ENCODE measurements at regions of chr1 and their contacts with region 1.

Region 1: DNA sequence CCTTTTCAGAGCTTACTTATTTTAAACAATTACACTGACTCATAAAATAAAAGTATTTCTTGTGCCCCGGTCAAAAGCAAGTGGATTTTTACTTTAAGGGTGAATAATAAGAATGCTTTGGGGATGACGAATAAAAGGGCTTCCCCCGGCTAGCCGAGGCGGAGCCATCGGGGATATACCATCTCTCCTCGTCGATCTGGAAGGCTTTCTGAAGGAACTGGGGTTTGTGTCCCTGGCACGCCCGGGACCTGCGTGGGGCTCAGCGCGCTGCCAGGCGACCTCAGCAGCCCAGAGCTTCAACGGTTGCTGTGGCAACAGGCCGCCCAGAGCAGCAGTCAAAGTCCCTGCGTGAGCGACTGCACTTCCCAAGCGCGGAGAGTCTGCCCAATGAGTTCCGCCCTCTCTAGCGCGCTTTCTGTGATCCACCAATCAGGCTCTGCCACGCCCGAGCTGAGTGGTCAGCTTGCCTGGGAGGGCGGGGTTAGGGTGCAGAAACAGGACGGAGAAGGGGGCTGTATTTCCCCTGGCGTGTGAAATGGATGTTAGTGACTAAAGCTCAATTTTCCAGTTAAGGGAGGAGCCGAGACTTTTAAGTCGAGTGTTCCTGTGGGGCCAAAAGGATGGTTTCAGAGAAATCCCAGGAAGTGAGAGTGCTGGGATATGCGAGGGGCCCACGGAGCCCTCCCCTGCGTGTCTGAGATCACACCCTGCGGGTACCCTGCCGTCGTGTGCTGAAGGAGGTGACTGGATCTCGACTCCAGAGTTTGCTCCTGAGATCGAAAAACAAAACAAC is 33.0 kb upstream of the MGST3 start:
- DNase-seq: peak; percentile 95
- H3K4me3 Mint-ChIP-seq: peak overlapping the region; percentile 85
- H3K27ac Mint-ChIP-seq: peak overlapping the region; percentile 76
- H3K4me1 Mint-ChIP-seq: peaks cover 34% of the 10 kb centered on the region
- H3K27me3 Mint-ChIP-seq: peaks cover 33% of the 10 kb centered on the region

Region 2: DNA sequence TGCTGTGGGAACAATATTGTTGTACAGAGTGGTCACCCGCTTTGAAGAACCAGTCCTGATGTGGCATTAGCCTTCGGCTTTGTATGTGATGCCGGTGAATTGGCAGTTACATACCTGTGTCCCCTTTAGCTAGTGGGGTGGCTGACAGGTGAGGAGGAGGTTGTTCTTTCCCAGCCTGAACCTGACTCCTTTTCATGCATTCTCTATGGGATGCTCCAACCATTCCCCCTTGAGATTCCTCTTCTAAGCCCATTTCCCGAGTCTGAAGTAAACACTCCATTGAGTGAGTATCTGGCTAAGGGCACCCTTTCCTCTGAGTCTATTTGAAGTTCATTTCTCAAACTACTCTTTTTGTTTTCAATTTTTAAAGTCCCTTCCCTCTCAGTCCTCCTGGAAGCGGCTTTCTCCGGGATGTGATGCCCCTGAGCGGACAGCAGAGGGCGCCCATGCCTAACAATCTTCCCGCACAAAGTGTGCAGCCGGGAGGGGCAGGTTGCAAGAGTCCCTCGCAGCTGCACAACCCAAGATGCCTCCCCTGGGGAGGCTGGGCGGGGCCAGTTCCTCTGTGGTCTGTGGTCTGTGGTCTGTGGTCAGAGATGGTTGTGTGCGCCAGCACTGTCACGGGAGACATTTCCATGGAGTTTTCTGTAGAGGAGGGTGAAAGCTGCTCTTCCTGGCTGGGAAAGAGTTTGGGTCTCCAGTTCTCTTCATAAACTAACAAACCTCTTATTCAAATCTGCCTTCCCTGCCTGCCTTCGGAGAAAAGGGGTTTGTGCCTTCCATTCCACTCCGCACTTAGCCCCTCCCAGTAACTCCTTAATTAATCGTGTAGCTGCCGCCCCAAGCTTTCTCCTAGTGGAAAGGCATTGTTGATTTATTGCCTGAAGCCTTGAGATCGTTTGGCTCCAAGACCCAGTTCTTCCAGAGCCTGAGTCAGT is 205.2 kb before region 1 on chr1:
- CTCF ChIA-PET with region 1: interaction called, 96 read pairs
- POLR2A ChIA-PET with region 1: interaction called, 12 read pairs
- DNase-seq: peak; percentile 95
- H3K4me3 Mint-ChIP-seq: peak overlapping the region; percentile 59
- H3K27ac Mint-ChIP-seq: peak overlapping the region; percentile 68
- H3K4me1 Mint-ChIP-seq: peaks cover 26% of the 10 kb centered on the region
- H3K27me3 Mint-ChIP-seq: peaks cover 87% of the 10 kb centered on the region

Region 3: GRCh38 chr1:165444897-165445370 is 153.1 kb before region 1 on chr1 and contains the start of gene RXRG:
- CTCF ChIA-PET with region 1: no interaction called
- POLR2A ChIA-PET with region 1: no interaction called
- DNase-seq: peak; percentile 24
- H3K4me3 Mint-ChIP-seq: no peak within 1 kb of the TSS
- H3K27ac Mint-ChIP-seq: no peak within 1 kb of the TSS
- H3K4me1 Mint-ChIP-seq: peaks cover 3% of the 10 kb centered on the region
- H3K27me3 Mint-ChIP-seq: peaks cover 33% of the 10 kb centered on the region
- total RNA-seq, gene RXRG: not detected

Region 4: GRCh38 chr1:165580941-165581871 is 16.9 kb before region 1 on chr1:
- CTCF ChIA-PET with region 1: interaction called, 10 read pairs
- POLR2A ChIA-PET with region 1: no interaction called
- DNase-seq: no peak
- H3K4me3 Mint-ChIP-seq: no peak overlapping the region
- H3K27ac Mint-ChIP-seq: no peak overlapping the region
- H3K4me1 Mint-ChIP-seq: no peaks in the 10 kb centered on the region
- H3K27me3 Mint-ChIP-seq: peaks cover 32% of the 10 kb centered on the region

Region 5: GRCh38 chr1:165645654-165646366 is 47.7 kb after region 1 on chr1:
- CTCF ChIA-PET with region 1: interaction called, 16 read pairs
- POLR2A ChIA-PET with region 1: interaction called, 4 read pairs
- DNase-seq: peak; percentile 58
- H3K4me3 Mint-ChIP-seq: peak overlapping the region; percentile 8
- H3K27ac Mint-ChIP-seq: peak overlapping the region; percentile 70
- H3K4me1 Mint-ChIP-seq: peaks cover 50% of the 10 kb centered on the region
- H3K27me3 Mint-ChIP-seq: no peaks in the 10 kb centered on the region

Region 6: DNA sequence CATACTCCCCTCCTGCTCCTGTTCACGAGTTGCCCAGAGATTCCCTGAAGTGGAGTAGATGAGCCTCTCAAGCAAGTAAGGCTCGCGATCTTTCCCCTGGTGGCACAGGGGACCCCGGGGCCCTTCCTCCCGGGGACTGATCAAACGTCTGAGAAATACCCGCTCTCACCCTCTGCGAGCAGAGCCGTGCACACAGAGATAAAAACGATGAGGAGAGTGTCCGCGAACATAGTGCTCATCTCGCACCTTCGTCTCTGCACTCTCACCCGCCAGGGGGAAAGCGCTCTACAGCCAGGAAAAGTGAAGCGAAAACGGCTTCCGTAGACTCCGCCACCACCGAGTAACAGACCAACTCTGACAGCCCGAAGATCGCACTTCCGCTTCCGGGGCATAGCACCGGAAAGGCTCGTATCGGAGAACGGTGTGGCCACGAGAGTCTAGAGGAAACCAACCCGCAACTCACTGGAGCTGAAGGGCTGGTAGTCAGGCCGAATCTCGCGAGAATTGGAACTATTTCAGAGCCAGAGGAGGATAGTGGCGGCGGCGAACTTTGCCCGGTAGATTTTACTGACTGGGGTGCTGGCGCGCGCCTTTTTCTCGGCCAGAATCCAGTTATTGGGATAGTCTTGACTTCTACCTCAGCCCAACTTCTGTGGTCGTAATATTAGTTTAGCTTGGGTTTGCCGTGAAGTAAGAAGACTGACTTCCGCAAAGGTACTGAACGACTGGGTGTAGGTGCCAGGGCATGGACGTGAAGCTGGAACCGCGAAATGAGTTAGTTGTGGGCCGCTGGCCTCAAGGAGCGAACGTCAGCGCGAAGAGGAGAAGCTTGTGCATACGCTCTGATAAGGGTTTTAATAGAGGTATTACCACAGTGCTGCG is 170.7 kb after region 1 on chr1 and contains the start of gene TMCO1:
- CTCF ChIA-PET with region 1: interaction called, 10 read pairs
- POLR2A ChIA-PET with region 1: interaction called, 16 read pairs
- DNase-seq: peak; percentile 97
- H3K4me3 Mint-ChIP-seq: peak within 1 kb of the TSS; percentile 98
- H3K27ac Mint-ChIP-seq: peak within 1 kb of the TSS; percentile 99
- H3K4me1 Mint-ChIP-seq: peaks cover 55% of the 10 kb centered on the region
- H3K27me3 Mint-ChIP-seq: no peaks in the 10 kb centered on the region
- total RNA-seq, gene TMCO1: 113 to 115 TPM

Region 7: GRCh38 chr1:165924117-165924516 is 326.0 kb after region 1 on chr1:
- CTCF ChIA-PET with region 1: interaction called, 10 read pairs
- POLR2A ChIA-PET with region 1: no interaction called
- DNase-seq: no peak
- H3K4me3 Mint-ChIP-seq: no peak overlapping the region
- H3K27ac Mint-ChIP-seq: no peak overlapping the region
- H3K4me1 Mint-ChIP-seq: peaks cover 11% of the 10 kb centered on the region
- H3K27me3 Mint-ChIP-seq: peaks cover 11% of the 10 kb centered on the region

Measured in activated CD4-positive, alpha-beta memory T cell treated with anti-CD3 and anti-CD28 coated beads, Interleukin-2, amount 10 ng/mL, durations not matched to agents 7 days and 5 days (primary cell).